ENCODE measurements at regions of chr2 and their contacts with region 1.

Region 1: DNA sequence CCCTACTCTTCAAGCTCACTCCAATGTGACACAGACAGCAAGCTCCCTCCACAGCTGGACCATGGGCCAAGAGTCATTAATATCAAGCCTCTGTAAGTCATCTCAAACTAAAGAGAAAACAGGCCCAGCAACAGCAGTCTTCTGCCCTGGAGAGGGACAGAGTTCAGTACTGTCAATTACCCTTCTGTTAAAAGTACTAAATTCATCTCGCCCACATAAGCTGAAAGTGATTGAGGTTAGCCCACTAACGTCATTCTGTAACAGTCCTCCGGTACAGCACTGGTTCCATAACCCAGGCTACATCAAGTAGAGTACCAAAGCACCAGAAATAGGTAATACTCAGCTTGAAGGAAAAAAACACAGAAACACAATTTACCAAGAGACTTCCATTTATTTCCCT is 25.9 kb downstream of the THADA start:
- DNase-seq: no peak
- ATAC-seq: no peak
- H3K4me3 ChIP-seq: no peak overlapping the region
- H3K27ac ChIP-seq: no peak overlapping the region
- H3K4me1 ChIP-seq: no peaks in the 10 kb centered on the region
- H3K27me3 ChIP-seq: no peaks in the 10 kb centered on the region
- CTCF ChIP-seq: no peak
- POLR2A ChIP-seq: no peak
- RAD21 ChIP-seq: no peak

Region 2: GRCh38 chr2:42954227-42954962 is 615.5 kb before region 1 on chr2:
- CTCF ChIA-PET with region 1: no interaction called
- POLR2A ChIA-PET with region 1: interaction called, 11 read pairs
- dilution Hi-C with region 1: no loop called
- in situ Hi-C with region 1: no loop called
- intact Hi-C with region 1: no loop called
- DNase-seq: peak; percentile 65
- ATAC-seq: peak; percentile 25; the same call in 1 of the 2 replicates
- H3K4me3 ChIP-seq: no peak overlapping the region
- H3K27ac ChIP-seq: no peak overlapping the region
- H3K4me1 ChIP-seq: peaks cover 20% of the 10 kb centered on the region
- H3K27me3 ChIP-seq: no peaks in the 10 kb centered on the region
- CTCF ChIP-seq: no peak
- POLR2A ChIP-seq: no peak
- RAD21 ChIP-seq: no peak

Region 3: DNA sequence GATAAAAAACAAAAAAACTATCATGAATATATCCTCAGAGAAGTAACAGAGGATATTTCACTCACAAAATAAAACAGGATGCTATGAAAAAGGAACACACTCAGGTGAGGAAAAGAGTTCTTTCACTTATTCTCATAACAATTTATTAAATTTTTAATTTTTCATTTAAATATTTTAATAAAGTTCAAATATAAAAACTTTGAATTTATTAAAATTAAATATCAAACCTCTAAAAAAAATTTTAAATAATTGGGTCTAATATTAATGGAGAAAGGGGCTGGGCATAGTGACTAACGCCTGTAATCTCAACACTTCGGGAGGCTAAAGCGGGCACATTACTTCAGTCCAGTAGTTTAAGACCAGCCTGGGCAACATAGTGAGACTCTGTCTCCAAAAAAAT is 15.8 kb after region 1 on chr2:
- CTCF ChIA-PET with region 1: no interaction called
- POLR2A ChIA-PET with region 1: no interaction called
- dilution Hi-C with region 1: no loop called
- in situ Hi-C with region 1: no loop called
- intact Hi-C with region 1: no loop called
- DNase-seq: no peak
- ATAC-seq: no peak
- H3K4me3 ChIP-seq: no peak overlapping the region
- H3K27ac ChIP-seq: no peak overlapping the region
- H3K4me1 ChIP-seq: no peaks in the 10 kb centered on the region
- H3K27me3 ChIP-seq: no peaks in the 10 kb centered on the region
- CTCF ChIP-seq: no peak
- POLR2A ChIP-seq: no peak
- RAD21 ChIP-seq: no peak

Region 4: DNA sequence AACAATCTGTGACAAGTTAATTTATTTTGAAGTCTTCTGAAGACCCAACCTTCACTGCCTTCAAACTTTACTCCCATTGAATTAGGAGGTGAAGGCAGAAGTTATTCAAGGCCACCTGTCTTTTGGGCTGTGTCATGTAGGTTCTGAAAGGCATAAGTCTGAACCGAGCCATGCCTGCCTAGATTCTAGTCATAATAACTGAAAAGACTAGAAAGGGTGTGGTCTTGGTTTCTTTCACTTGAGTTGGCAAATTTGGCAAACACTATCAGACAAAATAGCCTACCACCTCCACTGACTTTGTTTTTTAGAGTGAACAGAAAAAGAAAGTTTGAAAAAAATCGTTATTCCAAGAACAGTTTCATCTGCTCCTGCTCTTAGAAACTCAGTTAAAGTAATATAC is 637.2 kb after region 1 on chr2:
- CTCF ChIA-PET with region 1: no interaction called
- POLR2A ChIA-PET with region 1: no interaction called
- dilution Hi-C with region 1: no loop called
- in situ Hi-C with region 1: no loop called
- intact Hi-C with region 1: no loop called
- DNase-seq: no peak
- ATAC-seq: no peak
- H3K4me3 ChIP-seq: no peak overlapping the region
- H3K27ac ChIP-seq: no peak overlapping the region
- H3K4me1 ChIP-seq: no peaks in the 10 kb centered on the region
- H3K27me3 ChIP-seq: no peaks in the 10 kb centered on the region
- CTCF ChIP-seq: no peak
- POLR2A ChIP-seq: no peak
- RAD21 ChIP-seq: no peak